K562 (cell line): ENCODE measurements at regions of chr20 and their contacts with region 1.

Region 1: GRCh38 chr20:59515014-59515905 is 89.1 kb upstream of the PHACTR3 start:
- DNase-seq: peak; percentile 62 to 68 (median 64)
- ATAC-seq: peak; percentile 96
- H3K4me3 ChIP-seq: no peak overlapping the region
- H3K27ac ChIP-seq: no peak overlapping the region
- H3K4me1 ChIP-seq: peaks cover 0 to 5% of the 10 kb centered on the region in 2 experiments; a peak in 1 of 5 replicates
- H3K27me3 ChIP-seq: peaks cover 0 to 9% of the 10 kb centered on the region in 2 experiments; a peak in 2 of 5 replicates
- CTCF ChIP-seq: peak; percentile 79 to 94 (median 92)
- EP300 ChIP-seq: no peak
- POLR2A ChIP-seq: no peak
- RAD21 ChIP-seq: peak; percentile 16 to 44; a peak in 2 of 4 replicates

Region 2: GRCh38 chr20:58930496-58931004 is 584.7 kb before region 1 on chr20:
- CTCF ChIA-PET with region 1: no interaction called
- POLR2A ChIA-PET with region 1: no interaction called
- in situ Hi-C with region 1: no loop called
- intact Hi-C with region 1: no loop called
- DNase-seq: no peak
- ATAC-seq: no peak
- H3K4me3 ChIP-seq: no peak overlapping the region
- H3K27ac ChIP-seq: no peak overlapping the region
- H3K4me1 ChIP-seq: no peaks in the 10 kb centered on the region; a peak in 1 of 5 replicates
- H3K27me3 ChIP-seq: peaks cover 32 to 46% of the 10 kb centered on the region in 2 experiments
- CTCF ChIP-seq: no peak
- EP300 ChIP-seq: no peak
- POLR2A ChIP-seq: no peak
- RAD21 ChIP-seq: no peak

Region 3: DNA sequence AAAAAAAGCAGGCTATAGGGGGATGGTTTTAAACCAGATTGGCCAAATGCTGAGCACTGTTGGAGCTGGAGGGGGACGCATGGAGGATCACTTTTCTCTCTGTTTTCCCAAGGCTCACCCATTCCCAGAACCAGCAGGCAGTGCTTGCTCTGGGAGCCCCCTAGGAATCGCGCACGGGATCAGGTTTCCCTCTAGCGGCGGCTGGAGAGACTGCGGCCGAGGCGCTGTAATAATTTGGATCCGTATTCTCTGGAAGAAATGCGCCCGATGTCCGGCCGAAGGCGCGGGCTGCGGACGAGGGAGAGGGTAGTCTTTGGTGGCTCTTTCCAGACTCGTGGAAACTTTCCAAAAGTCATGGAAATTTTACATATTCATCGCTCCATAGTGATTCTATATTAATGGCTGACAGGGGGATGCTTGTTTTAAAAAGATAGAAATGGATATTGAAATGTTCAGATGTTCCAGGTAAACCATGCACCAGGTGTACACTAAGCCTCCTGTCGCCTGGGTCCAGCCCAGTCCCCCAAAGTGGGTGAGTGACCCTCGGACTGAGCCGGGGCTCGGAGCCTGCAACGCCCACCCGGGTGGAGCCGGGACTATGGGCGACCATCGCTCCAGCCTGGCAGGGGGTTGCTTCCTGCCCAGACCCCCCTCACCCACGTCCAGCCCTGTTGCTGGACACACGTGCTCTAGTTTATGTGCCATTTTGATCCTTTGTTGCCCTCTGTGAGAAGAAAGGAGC is 10.4 kb after region 1 on chr20:
- CTCF ChIA-PET with region 1: interaction called, 12 read pairs
- POLR2A ChIA-PET with region 1: interaction called, 4 read pairs
- in situ Hi-C with region 1: no loop called
- intact Hi-C with region 1: loop called (anchors 1 kb)
- DNase-seq: peak; percentile 49 to 62 (median 57)
- ATAC-seq: peak; percentile 98
- H3K4me3 ChIP-seq: no peak overlapping the region
- H3K27ac ChIP-seq: no peak overlapping the region
- H3K4me1 ChIP-seq: peaks cover 0 to 7% of the 10 kb centered on the region in 2 experiments; a peak in 1 of 5 replicates
- H3K27me3 ChIP-seq: peaks cover 0 to 5% of the 10 kb centered on the region in 2 experiments; a peak in 2 of 5 replicates
- CTCF ChIP-seq: peak; percentile 86 to 92 (median 91)
- EP300 ChIP-seq: no peak
- POLR2A ChIP-seq: no peak
- RAD21 ChIP-seq: peak in 1 of 2 experiments; percentile 53; a peak in 2 of 4 replicates